Activated CD4-positive, alpha-beta memory T cell treated with anti-CD3 and anti-CD28 coated beads for 36 hours (primary cell): ENCODE measurements at regions of chr6 and their contacts with region 1.

Region 1: GRCh38 chr6:42009966-42010891 is 40.1 kb upstream of the TAF8 start:
- DNase-seq: peak; percentile 67
- H3K4me3 Mint-ChIP-seq: peak overlapping the region; percentile 68
- H3K27ac Mint-ChIP-seq: peak overlapping the region; percentile 97
- H3K4me1 Mint-ChIP-seq: peaks cover 69% of the 10 kb centered on the region
- H3K27me3 Mint-ChIP-seq: no peaks in the 10 kb centered on the region

Region 2: GRCh38 chr6:41970436-41970846 is 39.8 kb before region 1 on chr6:
- CTCF ChIA-PET with region 1: interaction called, 4 read pairs
- POLR2A ChIA-PET with region 1: interaction called, 5 read pairs
- intact Hi-C with region 1: loop called (anchors 2 kb)
- DNase-seq: peak; percentile 82
- H3K4me3 Mint-ChIP-seq: peak overlapping the region; percentile 57
- H3K27ac Mint-ChIP-seq: peak overlapping the region; percentile 99
- H3K4me1 Mint-ChIP-seq: peaks cover 81% of the 10 kb centered on the region
- H3K27me3 Mint-ChIP-seq: no peaks in the 10 kb centered on the region

Region 3: GRCh38 chr6:41984623-41985022 is 25.6 kb before region 1 on chr6:
- CTCF ChIA-PET with region 1: no interaction called
- POLR2A ChIA-PET with region 1: no interaction called
- intact Hi-C with region 1: loop called (anchors 2 kb)
- DNase-seq: no peak
- H3K4me3 Mint-ChIP-seq: no peak overlapping the region
- H3K27ac Mint-ChIP-seq: peak overlapping the region; percentile 10
- H3K4me1 Mint-ChIP-seq: peaks cover 66% of the 10 kb centered on the region
- H3K27me3 Mint-ChIP-seq: no peaks in the 10 kb centered on the region